ENCODE measurements at regions of chr1 and their contacts with region 1.

Region 1: GRCh38 chr1:110766025-110766647 is 91.4 kb upstream of the KCNA3 start:
- DNase-seq: peak; percentile 82
- H3K4me3 ChIP-seq: peak overlapping the region; percentile 24
- H3K27ac ChIP-seq: no peak overlapping the region
- H3K4me1 ChIP-seq: peaks cover 14% of the 10 kb centered on the region
- CTCF ChIP-seq: peak; percentile 99

Region 2: GRCh38 chr1:110619412-110620249 is 146.5 kb before region 1 on chr1:
- CTCF ChIA-PET with region 1: interaction called, 8 read pairs
- POLR2A ChIA-PET with region 1: interaction called, 15 read pairs
- intact Hi-C with region 1: loop called (anchors 1 kb)
- DNase-seq: peak; percentile 90
- H3K4me3 ChIP-seq: peak overlapping the region; percentile 64
- H3K27ac ChIP-seq: no peak overlapping the region
- H3K4me1 ChIP-seq: peaks cover 29% of the 10 kb centered on the region
- CTCF ChIP-seq: peak; percentile 98

Region 3: GRCh38 chr1:110639724-110640386 is 126.3 kb before region 1 on chr1:
- CTCF ChIA-PET with region 1: interaction called, 18 read pairs
- POLR2A ChIA-PET with region 1: interaction called, 10 read pairs
- intact Hi-C with region 1: no loop called
- DNase-seq: no peak
- H3K4me3 ChIP-seq: no peak overlapping the region
- H3K27ac ChIP-seq: no peak overlapping the region
- H3K4me1 ChIP-seq: peaks cover 72% of the 10 kb centered on the region
- CTCF ChIP-seq: no peak

Region 4: GRCh38 chr1:110787328-110788071 is 21.4 kb after region 1 on chr1:
- CTCF ChIA-PET with region 1: interaction called, 5 read pairs
- POLR2A ChIA-PET with region 1: interaction called, 13 read pairs
- intact Hi-C with region 1: no loop called
- DNase-seq: peak; percentile 82
- H3K4me3 ChIP-seq: peak overlapping the region; percentile 47
- H3K27ac ChIP-seq: peak overlapping the region; percentile 80
- H3K4me1 ChIP-seq: peaks cover 30% of the 10 kb centered on the region
- CTCF ChIP-seq: peak; percentile 37; the same call in 1 of the 2 replicates

Measured in OCI-LY7 (cell line).